ENCODE measurements at regions of chr9 and their contacts with region 1.

Region 1: DNA sequence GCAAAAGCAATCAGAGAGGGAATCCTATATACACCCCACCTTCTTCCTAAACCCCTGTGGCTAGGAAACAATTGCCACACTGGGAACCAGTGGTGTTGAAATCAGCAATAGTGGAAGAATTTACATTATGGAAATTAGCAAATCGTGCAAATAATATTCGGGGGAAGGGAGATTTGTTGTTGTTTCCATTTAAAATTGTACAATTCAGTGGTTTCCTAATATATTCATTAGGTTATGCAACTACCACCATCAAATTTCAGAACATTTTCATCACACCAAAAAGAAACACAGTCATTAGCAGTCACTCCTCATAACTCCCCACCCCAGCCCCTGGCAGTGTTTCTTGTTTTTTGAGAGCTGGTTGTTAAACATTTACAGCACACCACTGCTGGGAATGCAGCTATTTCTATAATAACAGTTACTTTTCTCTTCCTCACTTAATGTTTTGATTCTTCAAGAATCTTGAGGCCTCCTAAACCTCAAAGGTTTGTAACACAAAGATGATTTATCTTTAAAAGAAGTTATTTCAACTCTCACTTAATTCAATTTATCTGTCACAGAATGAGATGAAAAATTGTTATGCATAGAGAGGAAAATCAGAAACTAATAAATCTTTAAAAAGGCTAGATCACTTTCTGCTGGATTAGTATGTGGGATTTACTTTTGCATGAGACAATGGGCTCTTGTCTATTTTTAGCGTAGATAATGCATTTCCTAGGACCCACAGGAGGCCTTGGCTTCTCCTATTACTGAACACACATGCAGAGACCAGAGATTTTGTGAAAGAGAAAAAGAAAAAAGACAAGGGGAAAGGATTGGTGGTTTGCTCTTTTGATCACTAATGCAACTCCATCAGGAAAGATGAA is 91.8 kb upstream of the DAPK1 start:
- DNase-seq: peak in 1 of 2 experiments; percentile 65
- H3K4me3 ChIP-seq: peak overlapping the region; percentile 2; the same call in 1 of the 2 replicates
- H3K27ac ChIP-seq: peak overlapping the region; percentile 69
- H3K4me1 ChIP-seq: peaks cover 53% of the 10 kb centered on the region
- H3K27me3 ChIP-seq: no peaks in the 10 kb centered on the region
- CTCF ChIP-seq: no peak

Region 2: DNA sequence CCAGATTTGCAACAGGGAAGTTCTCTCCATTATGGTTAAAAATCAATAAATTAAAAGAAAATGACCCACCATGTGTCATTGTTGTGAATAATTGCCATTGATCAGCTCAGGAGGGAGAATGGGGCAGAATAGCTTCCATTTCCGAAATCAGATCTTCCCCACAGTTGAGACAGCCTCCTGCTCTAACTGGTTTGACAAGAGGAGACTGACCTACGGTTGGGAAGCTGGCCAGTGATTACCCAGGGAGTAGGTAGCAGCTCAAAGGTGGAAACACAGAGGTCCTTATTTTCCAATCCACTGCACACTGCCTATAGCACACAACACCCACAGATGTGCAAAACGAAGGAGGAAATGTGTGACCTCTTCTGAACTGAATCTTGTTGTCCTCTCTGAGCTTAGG is 22.7 kb after region 1 on chr9:
- CTCF ChIA-PET with region 1: no interaction called
- POLR2A ChIA-PET with region 1: no interaction called
- intact Hi-C with region 1: loop called (anchors 2 kb)
- DNase-seq: peak; percentile 71 to 93
- H3K4me3 ChIP-seq: peak overlapping the region; percentile 41; the same call in 1 of the 2 replicates
- H3K27ac ChIP-seq: peak overlapping the region; percentile 88
- H3K4me1 ChIP-seq: peaks cover 31% of the 10 kb centered on the region
- H3K27me3 ChIP-seq: no peaks in the 10 kb centered on the region
- CTCF ChIP-seq: no peak

Region 3: GRCh38 chr9:87461256-87461655 is 55.3 kb after region 1 on chr9:
- CTCF ChIA-PET with region 1: no interaction called
- POLR2A ChIA-PET with region 1: no interaction called
- intact Hi-C with region 1: no loop called
- DNase-seq: no peak
- H3K4me3 ChIP-seq: no peak overlapping the region
- H3K27ac ChIP-seq: no peak overlapping the region
- H3K4me1 ChIP-seq: peaks cover 19% of the 10 kb centered on the region
- H3K27me3 ChIP-seq: no peaks in the 10 kb centered on the region
- CTCF ChIP-seq: no peak

Region 4: DNA sequence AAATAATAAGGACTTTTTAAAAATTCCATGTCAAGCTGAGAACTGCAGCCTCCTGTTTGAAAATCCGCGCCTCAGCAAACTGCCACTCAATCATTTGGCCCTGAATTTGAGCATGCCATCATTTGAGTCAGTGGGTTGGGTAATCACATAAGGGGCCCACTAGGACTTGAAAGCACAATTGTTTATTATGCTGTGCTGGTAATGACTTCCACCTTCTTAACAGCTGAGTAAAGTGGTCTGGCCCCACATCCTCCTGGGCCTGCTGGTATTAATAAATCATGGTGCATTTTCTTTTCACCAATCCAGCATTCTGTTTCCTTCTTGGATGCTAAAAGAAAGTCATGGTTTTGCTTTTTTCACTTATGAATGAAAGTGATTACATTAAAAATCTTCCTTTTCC is 217.0 kb after region 1 on chr9:
- CTCF ChIA-PET with region 1: interaction called, 13 read pairs
- POLR2A ChIA-PET with region 1: no interaction called
- intact Hi-C with region 1: no loop called
- DNase-seq: no peak
- H3K4me3 ChIP-seq: no peak overlapping the region
- H3K27ac ChIP-seq: no peak overlapping the region
- H3K4me1 ChIP-seq: no peaks in the 10 kb centered on the region
- H3K27me3 ChIP-seq: no peaks in the 10 kb centered on the region
- CTCF ChIP-seq: no peak

Region 5: DNA sequence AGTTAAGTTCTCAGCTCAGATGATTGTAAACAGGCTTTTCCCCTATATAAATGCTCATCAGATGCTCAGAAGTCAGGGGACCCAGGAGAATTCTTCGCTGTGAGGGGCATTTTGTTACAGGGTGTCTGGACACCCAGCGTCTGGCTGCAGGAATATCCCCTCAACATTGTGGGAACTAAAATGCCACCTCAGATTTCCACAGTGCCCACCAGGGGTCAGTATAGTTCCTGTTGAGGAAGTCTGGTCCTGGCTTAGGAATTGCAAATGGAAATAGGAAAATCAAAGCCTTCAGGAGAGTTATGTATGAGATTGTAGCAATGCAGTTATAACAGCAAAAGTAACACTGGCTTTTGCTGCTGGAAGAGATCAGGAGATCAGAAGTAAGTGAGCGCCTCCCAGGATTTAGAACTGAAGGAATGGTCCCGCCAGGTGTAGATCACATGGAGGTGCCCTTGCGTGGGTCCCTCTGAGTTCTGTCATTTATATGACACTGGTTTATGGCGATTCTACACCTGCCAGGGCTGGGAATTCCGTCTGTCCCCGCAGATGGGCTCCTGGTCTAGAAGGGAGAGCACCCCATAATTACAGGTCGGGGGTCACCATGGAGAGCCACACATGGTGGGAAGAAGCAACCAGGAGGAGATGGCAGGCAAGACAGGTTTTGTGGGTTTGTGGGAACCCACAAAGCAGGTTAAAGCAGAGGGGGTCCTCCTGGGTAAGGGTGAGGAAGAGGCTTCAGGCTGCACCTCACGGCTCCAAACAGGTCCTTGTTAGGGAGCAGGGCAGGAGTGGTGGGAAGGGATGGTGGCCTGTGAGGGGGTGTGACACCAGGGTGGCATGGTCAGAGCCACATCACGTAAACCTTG is 273.0 kb after region 1 on chr9:
- CTCF ChIA-PET with region 1: no interaction called
- POLR2A ChIA-PET with region 1: no interaction called
- intact Hi-C with region 1: no loop called
- DNase-seq: peak; percentile 50 to 59
- H3K4me3 ChIP-seq: no peak overlapping the region
- H3K27ac ChIP-seq: no peak overlapping the region
- H3K4me1 ChIP-seq: no peaks in the 10 kb centered on the region
- H3K27me3 ChIP-seq: no peaks in the 10 kb centered on the region
- CTCF ChIP-seq: peak; percentile 88